ENCODE measurements at regions of chr5 and their contacts with region 1.

Region 1: GRCh38 chr5:68287976-68288706 is 72.6 kb downstream of the PIK3R1 start:
- DNase-seq: peak; percentile 74
- H3K4me3 ChIP-seq: peak overlapping the region; percentile 52
- H3K27ac ChIP-seq: peak overlapping the region; percentile 93
- H3K4me1 ChIP-seq: peaks cover 10% of the 10 kb centered on the region
- H3K27me3 ChIP-seq: no peaks in the 10 kb centered on the region
- CTCF ChIP-seq: no peak

Region 2: DNA sequence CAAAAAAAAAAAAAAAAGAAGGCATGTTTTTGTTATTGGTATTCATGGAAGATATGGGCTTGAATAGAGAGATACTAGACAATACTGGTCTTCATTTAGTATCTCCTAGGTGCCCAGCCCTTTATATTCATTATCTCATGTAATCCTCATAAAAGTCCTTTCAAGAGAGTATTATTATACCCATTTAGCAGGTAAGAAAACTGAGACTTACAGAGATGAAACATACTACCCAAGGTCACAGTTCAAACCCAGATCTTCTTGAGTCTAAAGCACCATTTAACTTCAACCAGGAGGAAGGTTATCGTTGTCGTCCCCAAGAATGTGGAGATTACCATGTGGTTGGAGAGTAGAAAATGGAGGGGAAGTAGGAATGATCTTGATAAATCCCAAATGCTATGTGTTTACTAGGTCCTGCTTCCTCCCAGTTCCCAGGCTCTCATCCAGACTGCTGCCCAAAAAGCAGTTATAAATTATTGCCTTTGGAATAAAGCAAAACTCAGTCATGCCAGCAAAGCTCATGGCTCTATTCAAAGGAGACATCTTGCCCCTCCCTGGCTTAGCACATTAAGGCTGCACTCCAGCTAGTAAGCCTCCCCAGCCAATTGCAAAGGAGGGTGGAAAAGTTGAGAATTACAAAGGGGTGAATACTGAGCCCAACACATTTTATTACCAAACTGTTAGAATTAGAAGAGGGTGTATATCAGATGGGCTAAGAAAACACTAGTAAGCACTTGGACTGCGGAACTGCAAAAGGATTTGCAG is 91.3 kb after region 1 on chr5:
- intact Hi-C with region 1: loop called (anchors 10 kb)
- DNase-seq: peak; percentile 29
- H3K4me3 ChIP-seq: no peak overlapping the region
- H3K27ac ChIP-seq: no peak overlapping the region
- H3K4me1 ChIP-seq: no peaks in the 10 kb centered on the region
- H3K27me3 ChIP-seq: no peaks in the 10 kb centered on the region
- CTCF ChIP-seq: no peak

Region 3: GRCh38 chr5:68456756-68457217 is 168.6 kb after region 1 on chr5:
- intact Hi-C with region 1: loop called (anchors 5 kb)
- DNase-seq: peak; percentile 57
- H3K4me3 ChIP-seq: no peak overlapping the region
- H3K27ac ChIP-seq: no peak overlapping the region
- H3K4me1 ChIP-seq: no peaks in the 10 kb centered on the region
- H3K27me3 ChIP-seq: no peaks in the 10 kb centered on the region
- CTCF ChIP-seq: no peak

Region 4: GRCh38 chr5:68661237-68661636 is 373.1 kb after region 1 on chr5:
- intact Hi-C with region 1: loop called (anchors 10 kb)
- DNase-seq: peak; percentile 46
- H3K4me3 ChIP-seq: no peak overlapping the region
- H3K27ac ChIP-seq: no peak overlapping the region
- H3K4me1 ChIP-seq: no peaks in the 10 kb centered on the region
- H3K27me3 ChIP-seq: no peaks in the 10 kb centered on the region
- CTCF ChIP-seq: peak; percentile 46

Region 5: GRCh38 chr5:68962757-68963484 is 674.8 kb after region 1 on chr5:
- intact Hi-C with region 1: loop called (anchors 5 kb)
- DNase-seq: peak; percentile 81
- H3K4me3 ChIP-seq: no peak overlapping the region
- H3K27ac ChIP-seq: no peak overlapping the region
- H3K4me1 ChIP-seq: no peaks in the 10 kb centered on the region
- H3K27me3 ChIP-seq: no peaks in the 10 kb centered on the region
- CTCF ChIP-seq: peak; percentile 76